Heart left ventricle (tissue), 16 donors: ENCODE measurements at regions of chr2 and their contacts with region 1.

Region 1: GRCh38 chr2:134375935-134376334 is 122.1 kb downstream of the MGAT5 start:
- DNase-seq: peak in 2 of 5 donors; percentile 36 to 58
- ATAC-seq: peak; percentile 42 to 63 (median 50)
- H3K4me3 ChIP-seq: no peak overlapping the region
- H3K27ac ChIP-seq: peak overlapping the region in 4 of 12 donors; percentile 6 to 76 (median 26)
- H3K4me1 ChIP-seq: peaks cover 0 to 62% (median 33%) of the 10 kb centered on the region in 12 donors
- H3K27me3 ChIP-seq: no peaks in the 10 kb centered on the region
- CTCF ChIP-seq: peak; percentile 12 to 54 (median 38)
- POLR2A ChIP-seq: no peak

Region 2: GRCh38 chr2:134118279-134119116 is 257.4 kb before region 1 on chr2:
- intact Hi-C with region 1: no loop called
- DNase-seq: peak; percentile 84 to 91 (median 86)
- ATAC-seq: peak; percentile 42 to 72 (median 53)
- H3K4me3 ChIP-seq: peak overlapping the region in 3 of 12 donors; percentile 5 to 99 (median 73)
- H3K27ac ChIP-seq: peak overlapping the region; percentile 33 to 96 (median 94)
- H3K4me1 ChIP-seq: peaks cover 10 to 43% (median 34%) of the 10 kb centered on the region in 12 donors
- H3K27me3 ChIP-seq: no peaks in the 10 kb centered on the region
- CTCF ChIP-seq: peak; percentile 67 to 94 (median 84)
- POLR2A ChIP-seq: no peak

Region 3: DNA sequence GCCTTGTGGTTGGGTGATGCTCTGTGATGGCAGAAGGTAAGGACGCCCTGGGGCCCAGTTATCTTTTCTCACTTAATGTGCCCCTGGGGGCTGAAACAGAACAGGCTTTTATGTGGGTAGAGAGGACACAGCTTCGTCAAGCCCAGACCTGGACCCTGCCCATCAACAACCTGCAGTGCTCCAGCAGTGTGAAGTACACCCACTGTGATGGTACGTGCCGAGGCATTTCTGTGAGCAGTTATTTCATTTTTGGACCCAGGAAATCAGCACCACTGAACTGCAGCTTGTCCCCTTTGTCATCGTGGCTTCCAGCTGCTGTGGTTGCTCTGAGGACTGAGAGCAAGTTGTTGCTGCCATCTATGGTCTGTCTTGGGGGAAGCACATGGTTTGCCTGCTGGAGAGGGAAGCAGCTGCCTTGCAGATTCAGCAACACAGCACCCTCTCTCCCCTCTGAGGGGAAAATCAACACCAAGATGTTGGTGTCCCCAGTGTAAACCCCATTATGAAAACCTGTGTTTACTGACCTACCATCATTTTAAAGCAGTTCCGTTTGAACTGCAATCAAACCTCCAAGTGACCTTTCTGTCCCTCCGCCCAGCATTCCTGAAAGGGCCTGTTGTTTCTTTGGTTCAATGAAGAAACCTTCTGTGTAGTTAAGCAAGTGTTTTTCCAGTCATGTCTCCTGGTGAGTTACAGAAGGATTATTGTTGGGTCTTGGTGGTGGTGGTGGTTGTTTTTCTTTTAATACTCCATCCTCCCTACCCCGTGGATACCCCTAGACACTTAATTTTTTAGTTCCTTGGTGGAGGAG is 36.1 kb after region 1 on chr2:
- intact Hi-C with region 1: loop called in 7 of 10 experiments (anchors 2 to 5 kb)
- DNase-seq: peak in 4 of 5 donors; percentile 77 to 82 (median 78)
- ATAC-seq: peak; percentile 92 to 95 (median 94)
- H3K4me3 ChIP-seq: no peak overlapping the region
- H3K27ac ChIP-seq: peak overlapping the region in 9 of 12 donors; percentile 12 to 64 (median 42)
- H3K4me1 ChIP-seq: peaks cover 0 to 50% (median 38%) of the 10 kb centered on the region in 12 donors
- H3K27me3 ChIP-seq: no peaks in the 10 kb centered on the region
- CTCF ChIP-seq: peak; percentile 48 to 82 (median 71)
- POLR2A ChIP-seq: no peak

Region 4: GRCh38 chr2:134425724-134426496 is 50.0 kb after region 1 on chr2:
- intact Hi-C with region 1: no loop called
- DNase-seq: no peak
- ATAC-seq: no peak
- H3K4me3 ChIP-seq: no peak overlapping the region
- H3K27ac ChIP-seq: no peak overlapping the region
- H3K4me1 ChIP-seq: peaks cover 0 to 14% (median 1%) of the 10 kb centered on the region in 12 donors
- H3K27me3 ChIP-seq: no peaks in the 10 kb centered on the region
- CTCF ChIP-seq: no peak
- POLR2A ChIP-seq: no peak

Region 5: DNA sequence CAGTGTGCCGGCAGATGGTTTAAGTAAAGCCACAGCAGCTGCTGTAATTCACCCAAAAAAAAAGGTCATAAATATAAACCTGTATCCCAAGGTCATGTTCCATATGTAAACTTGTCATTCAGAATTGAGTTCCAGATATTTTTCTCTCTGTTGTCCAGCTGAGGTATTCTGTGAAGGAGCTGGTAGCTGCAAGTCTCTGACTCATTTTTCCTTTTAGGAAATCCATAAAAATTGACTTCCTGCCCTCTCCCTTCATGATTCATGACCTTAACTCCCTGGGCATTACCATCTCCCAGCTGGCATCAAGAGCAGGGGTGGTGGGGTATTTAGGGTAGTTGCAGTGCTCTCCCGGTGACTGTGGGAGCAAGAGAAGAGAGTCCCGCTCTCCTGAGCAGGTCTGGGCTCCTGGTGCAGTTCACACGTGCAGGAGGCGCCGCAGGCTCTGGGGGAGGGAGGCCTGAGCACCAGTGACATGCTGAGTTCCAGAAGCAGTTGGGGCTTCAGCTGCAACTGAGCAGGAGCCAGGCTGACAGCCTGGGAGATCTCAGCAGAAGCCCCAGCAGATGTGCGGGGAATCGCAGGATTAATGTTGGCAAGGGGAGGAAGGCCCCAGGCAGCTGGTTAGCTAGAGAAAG is 70.6 kb after region 1 on chr2:
- intact Hi-C with region 1: loop called in 3 of 10 experiments (anchors 5 to 10 kb)
- DNase-seq: no peak
- ATAC-seq: no peak
- H3K4me3 ChIP-seq: no peak overlapping the region
- H3K27ac ChIP-seq: peak overlapping the region in 1 of 12 donors; percentile 9
- H3K4me1 ChIP-seq: peaks cover 0 to 23% (median 7%) of the 10 kb centered on the region in 12 donors
- H3K27me3 ChIP-seq: no peaks in the 10 kb centered on the region
- CTCF ChIP-seq: no peak
- POLR2A ChIP-seq: no peak

Region 6: DNA sequence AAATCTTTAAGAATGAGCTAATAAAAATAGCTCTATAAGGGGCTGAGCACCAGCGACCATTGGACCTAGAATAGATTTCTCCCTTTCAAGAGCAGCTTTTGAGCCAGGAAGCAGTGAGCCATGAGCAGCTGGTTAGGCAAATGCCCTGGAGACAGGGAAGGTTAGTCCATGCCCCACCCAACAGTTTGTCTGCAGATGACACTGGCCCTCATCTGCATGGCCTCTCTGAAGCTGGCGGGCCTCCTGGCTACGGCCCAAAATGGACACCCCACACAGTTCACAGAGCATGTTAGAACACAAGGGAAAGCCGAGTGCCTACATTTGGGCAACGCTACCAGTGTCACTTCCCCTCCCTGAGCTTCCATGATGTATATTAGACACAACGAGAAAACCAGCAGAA is 79.0 kb after region 1 on chr2:
- intact Hi-C with region 1: loop called in 1 of 10 experiments (anchors 5 kb)
- DNase-seq: peak in 2 of 5 donors; percentile 13 to 40
- ATAC-seq: no peak
- H3K4me3 ChIP-seq: no peak overlapping the region
- H3K27ac ChIP-seq: no peak overlapping the region
- H3K4me1 ChIP-seq: peaks cover 0 to 16% (median 0%) of the 10 kb centered on the region in 12 donors
- H3K27me3 ChIP-seq: no peaks in the 10 kb centered on the region
- CTCF ChIP-seq: no peak
- POLR2A ChIP-seq: no peak